Heart left ventricle (tissue), 16 donors: ENCODE measurements at regions of chr6 and their contacts with region 1.

Region 1: GRCh38 chr6:108074359-108075144 is at the start of gene OSTM1:
- DNase-seq: peak; percentile 91 to 97 (median 93)
- ATAC-seq: peak; percentile 96 to 100 (median 99)
- H3K4me3 ChIP-seq: peak within 1 kb of the TSS; percentile 56 to 100 (median 96)
- H3K27ac ChIP-seq: peak within 1 kb of the TSS in 11 of 12 donors; percentile 70 to 91 (median 84)
- H3K4me1 ChIP-seq: peaks cover 0 to 18% (median 14%) of the 10 kb centered on the region in 12 donors
- H3K27me3 ChIP-seq: no peaks in the 10 kb centered on the region
- CTCF ChIP-seq: no peak
- POLR2A ChIP-seq: peak in 1 of 2 donors; percentile 89
- total RNA-seq, gene OSTM1: 29.3 to 69.3 (median 45.3) TPM

Region 2: GRCh38 chr6:107957909-107958688 is 116.5 kb before region 1 on chr6 and contains the start of gene SEC63:
- intact Hi-C with region 1: loop called in 2 of 10 experiments (anchors 10 kb)
- DNase-seq: peak; percentile 98 to 99 (median 98)
- ATAC-seq: peak; percentile 99 to 100 (median 99)
- H3K4me3 ChIP-seq: peak within 1 kb of the TSS; percentile 69 to 99 (median 84)
- H3K27ac ChIP-seq: peak within 1 kb of the TSS; percentile 30 to 95 (median 90)
- H3K4me1 ChIP-seq: peaks cover 0 to 31% (median 23%) of the 10 kb centered on the region in 12 donors
- H3K27me3 ChIP-seq: no peaks in the 10 kb centered on the region
- CTCF ChIP-seq: no peak
- POLR2A ChIP-seq: peak; percentile 69 to 85
- total RNA-seq, gene SEC63: 15.3 to 64.9 (median 56.0) TPM

Region 3: DNA sequence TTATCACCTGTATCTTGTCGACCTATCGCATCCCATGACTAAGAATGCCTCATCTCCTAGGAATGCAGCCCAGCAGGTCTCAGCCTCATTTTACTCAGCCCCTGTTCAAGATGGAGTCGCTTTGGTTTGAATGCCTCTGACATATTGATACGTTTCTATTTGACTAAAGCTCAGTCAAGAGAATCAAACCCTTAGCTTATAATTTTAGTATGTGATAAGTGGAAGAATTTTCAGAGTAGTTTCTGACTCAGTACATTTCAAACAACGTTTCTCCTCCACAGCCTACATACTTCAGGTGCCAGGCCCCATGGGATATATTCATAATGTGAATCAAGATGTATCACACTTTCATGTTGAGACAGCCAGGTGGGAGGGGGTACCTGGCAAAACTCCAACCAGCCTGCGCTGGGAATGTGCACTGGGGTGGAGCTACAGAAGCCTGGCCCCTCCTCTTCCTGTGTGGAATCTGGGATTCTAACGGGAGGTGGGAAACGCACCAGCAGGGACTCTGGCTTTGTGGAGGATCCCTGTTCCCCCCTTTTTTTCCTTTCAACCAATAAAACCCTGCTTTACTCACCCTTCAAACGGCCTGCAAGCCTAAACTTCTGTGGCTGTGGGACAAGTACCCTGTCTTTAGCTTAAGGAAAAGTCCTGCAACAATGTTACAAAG is 109.7 kb before region 1 on chr6:
- intact Hi-C with region 1: loop called in 1 of 10 experiments (anchors 10 kb)
- DNase-seq: no peak
- ATAC-seq: no peak
- H3K4me3 ChIP-seq: no peak overlapping the region
- H3K27ac ChIP-seq: no peak overlapping the region
- H3K4me1 ChIP-seq: no peaks in the 10 kb centered on the region
- H3K27me3 ChIP-seq: no peaks in the 10 kb centered on the region
- CTCF ChIP-seq: no peak
- POLR2A ChIP-seq: no peak

Region 4: DNA sequence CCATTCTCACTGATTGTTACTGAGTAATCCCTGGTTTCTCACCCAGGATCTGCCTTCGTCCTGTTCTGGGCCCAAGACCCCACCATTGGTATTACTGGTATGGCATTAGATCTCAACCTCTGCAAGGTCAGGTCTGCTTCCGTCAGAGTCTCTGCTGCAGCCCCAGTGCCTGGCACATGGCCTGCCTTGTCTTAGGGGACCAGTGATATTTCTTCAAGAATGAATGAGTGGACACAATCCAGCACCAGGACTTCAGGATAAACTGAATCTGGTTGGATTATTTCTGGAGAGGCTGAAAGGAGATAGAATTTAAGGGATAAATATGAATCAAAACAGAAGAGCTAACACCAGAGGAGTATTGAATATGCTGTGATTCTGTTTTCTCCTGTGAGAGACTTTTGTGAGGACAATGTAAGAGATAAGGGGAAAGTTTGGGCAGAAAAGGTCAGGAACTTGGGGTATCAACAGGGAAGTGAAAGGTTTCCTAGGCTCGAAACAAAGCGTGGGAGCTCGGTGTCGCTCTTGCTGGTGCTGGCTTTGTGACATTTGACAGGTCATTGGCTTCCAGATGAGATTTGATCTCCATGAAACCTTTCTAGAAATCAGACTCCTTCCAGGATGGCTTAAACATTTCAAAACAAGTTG is 54.0 kb before region 1 on chr6:
- intact Hi-C with region 1: no loop called
- DNase-seq: no peak
- ATAC-seq: no peak
- H3K4me3 ChIP-seq: no peak overlapping the region
- H3K27ac ChIP-seq: no peak overlapping the region
- H3K4me1 ChIP-seq: no peaks in the 10 kb centered on the region
- H3K27me3 ChIP-seq: no peaks in the 10 kb centered on the region
- CTCF ChIP-seq: no peak
- POLR2A ChIP-seq: no peak